ENCODE measurements at regions of chr1 and their contacts with region 1.

Region 1: GRCh38 chr1:31789259-31790065 is 25.3 kb upstream of the ADGRB2 start:
- DNase-seq: peak; percentile 50
- ATAC-seq: peak; percentile 87
- H3K4me3 ChIP-seq: peak overlapping the region; percentile 53 to 88
- H3K27ac ChIP-seq: peak overlapping the region; percentile 18; the same call in 1 of the 2 replicates
- H3K4me1 ChIP-seq: 0 out of 2 replicates have a peak, but pooled peaks cover 14% of the 10 kb centered on the region
- H3K27me3 ChIP-seq: no peaks in the 10 kb centered on the region
- CTCF ChIP-seq: peak; percentile 97

Region 2: GRCh38 chr1:31476891-31477828 is 312.3 kb before region 1 on chr1:
- CTCF ChIA-PET with region 1: no interaction called
- POLR2A ChIA-PET with region 1: no interaction called
- in situ Hi-C with region 1: no loop called
- intact Hi-C with region 1: no loop called
- DNase-seq: no peak
- ATAC-seq: no peak
- H3K4me3 ChIP-seq: no peak overlapping the region
- H3K27ac ChIP-seq: no peak overlapping the region
- H3K4me1 ChIP-seq: no peaks in the 10 kb centered on the region
- H3K27me3 ChIP-seq: no peaks in the 10 kb centered on the region
- CTCF ChIP-seq: no peak

Region 3: GRCh38 chr1:31548907-31549808 is 240.3 kb before region 1 on chr1:
- CTCF ChIA-PET with region 1: interaction called, 13 read pairs
- POLR2A ChIA-PET with region 1: no interaction called
- in situ Hi-C with region 1: no loop called
- intact Hi-C with region 1: no loop called
- DNase-seq: peak; percentile 84
- ATAC-seq: peak; percentile 95
- H3K4me3 ChIP-seq: peak overlapping the region; percentile 35 to 53
- H3K27ac ChIP-seq: peak overlapping the region; percentile 3; the same call in 1 of the 2 replicates
- H3K4me1 ChIP-seq: peaks cover 3% of the 10 kb centered on the region; the same call in 1 of the 2 replicates
- H3K27me3 ChIP-seq: no peaks in the 10 kb centered on the region
- CTCF ChIP-seq: peak; percentile 95

Region 4: DNA sequence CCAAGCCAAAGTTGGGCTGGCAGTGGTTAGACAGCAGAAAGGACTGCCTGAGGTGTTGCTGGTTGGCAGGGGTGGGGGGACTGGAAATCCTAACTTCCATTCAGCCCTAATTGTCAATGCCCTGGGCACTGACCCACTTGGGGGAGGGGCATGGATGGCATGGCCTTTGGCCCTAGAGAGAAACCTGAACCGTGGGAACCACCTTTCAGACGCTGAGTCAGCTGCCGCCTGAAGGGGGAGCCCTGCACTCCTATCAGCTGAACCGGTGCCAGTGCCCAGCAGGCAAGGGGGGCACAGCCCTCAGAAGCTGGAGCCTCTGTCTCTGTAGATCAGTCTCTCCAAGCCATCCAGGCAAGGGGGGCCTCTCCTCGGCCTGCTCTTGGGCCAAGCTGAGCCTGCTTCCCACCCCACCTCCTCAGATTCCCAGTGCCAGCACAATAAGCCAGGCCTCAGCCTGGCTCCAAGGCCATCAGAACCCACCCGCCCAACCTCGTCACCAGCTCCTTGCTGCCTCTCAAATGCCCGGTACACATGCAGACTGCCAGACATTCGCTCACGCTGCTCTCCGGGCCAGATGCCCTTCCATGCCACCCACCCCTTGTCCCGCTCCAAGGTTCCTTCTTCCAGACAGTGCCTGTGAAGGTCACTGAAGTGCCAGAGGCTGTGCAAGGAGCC is 201.6 kb before region 1 on chr1:
- CTCF ChIA-PET with region 1: interaction called, 10 read pairs
- POLR2A ChIA-PET with region 1: no interaction called
- in situ Hi-C with region 1: no loop called
- intact Hi-C with region 1: no loop called
- DNase-seq: no peak
- ATAC-seq: peak; percentile 75
- H3K4me3 ChIP-seq: no peak overlapping the region
- H3K27ac ChIP-seq: peak overlapping the region; percentile 71
- H3K4me1 ChIP-seq: peaks cover 33% of the 10 kb centered on the region
- H3K27me3 ChIP-seq: no peaks in the 10 kb centered on the region
- CTCF ChIP-seq: peak; percentile 91

Region 5: DNA sequence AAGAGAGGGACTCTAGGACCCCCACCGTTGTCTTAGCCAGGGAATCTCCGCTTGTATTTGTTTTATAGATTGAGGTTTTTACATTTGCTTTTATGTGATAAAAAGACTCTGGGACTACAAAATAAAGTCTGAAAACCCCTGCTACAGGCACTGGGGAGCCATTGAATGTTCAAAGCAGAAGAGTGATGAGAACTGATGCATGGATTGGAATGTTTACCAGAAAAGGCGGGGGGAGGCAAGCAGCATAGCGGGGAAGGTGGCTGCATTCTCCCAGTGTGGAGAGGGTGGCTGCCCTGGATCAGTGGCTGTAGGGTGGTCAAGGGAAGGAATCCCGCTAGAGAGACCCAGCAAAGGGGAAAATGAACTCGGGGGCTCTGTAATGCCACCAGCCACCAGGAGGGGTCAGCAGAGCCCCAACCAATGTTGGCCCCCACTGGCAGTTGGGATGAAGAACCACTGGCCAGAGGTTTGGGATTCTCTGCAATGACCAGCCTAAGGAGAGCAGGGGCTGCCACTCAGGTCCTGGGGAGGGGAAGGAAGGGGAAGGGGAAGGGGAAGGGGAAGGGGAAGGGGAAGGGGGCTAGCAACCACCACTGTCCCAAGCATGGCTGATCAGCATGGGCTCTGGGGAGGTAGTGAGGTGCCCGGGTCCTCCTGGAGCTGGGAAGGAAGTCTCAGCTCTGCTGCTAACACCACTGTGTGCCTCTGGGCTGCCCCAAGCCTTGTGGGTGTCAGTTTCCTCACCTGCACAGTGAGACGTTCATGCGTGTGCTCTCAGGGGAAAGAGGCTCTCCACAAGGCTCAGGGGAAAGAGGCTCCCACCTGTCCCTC is 125.6 kb before region 1 on chr1:
- CTCF ChIA-PET with region 1: interaction called, 23 read pairs
- POLR2A ChIA-PET with region 1: interaction called, 3 read pairs
- in situ Hi-C with region 1: no loop called
- intact Hi-C with region 1: loop called (anchors 1 kb)
- DNase-seq: peak; percentile 45
- ATAC-seq: peak; percentile 67
- H3K4me3 ChIP-seq: no peak overlapping the region
- H3K27ac ChIP-seq: peak overlapping the region; percentile 48; the same call in 1 of the 2 replicates
- H3K4me1 ChIP-seq: peaks cover 29% of the 10 kb centered on the region
- H3K27me3 ChIP-seq: no peaks in the 10 kb centered on the region
- CTCF ChIP-seq: peak; percentile 94

Region 6: DNA sequence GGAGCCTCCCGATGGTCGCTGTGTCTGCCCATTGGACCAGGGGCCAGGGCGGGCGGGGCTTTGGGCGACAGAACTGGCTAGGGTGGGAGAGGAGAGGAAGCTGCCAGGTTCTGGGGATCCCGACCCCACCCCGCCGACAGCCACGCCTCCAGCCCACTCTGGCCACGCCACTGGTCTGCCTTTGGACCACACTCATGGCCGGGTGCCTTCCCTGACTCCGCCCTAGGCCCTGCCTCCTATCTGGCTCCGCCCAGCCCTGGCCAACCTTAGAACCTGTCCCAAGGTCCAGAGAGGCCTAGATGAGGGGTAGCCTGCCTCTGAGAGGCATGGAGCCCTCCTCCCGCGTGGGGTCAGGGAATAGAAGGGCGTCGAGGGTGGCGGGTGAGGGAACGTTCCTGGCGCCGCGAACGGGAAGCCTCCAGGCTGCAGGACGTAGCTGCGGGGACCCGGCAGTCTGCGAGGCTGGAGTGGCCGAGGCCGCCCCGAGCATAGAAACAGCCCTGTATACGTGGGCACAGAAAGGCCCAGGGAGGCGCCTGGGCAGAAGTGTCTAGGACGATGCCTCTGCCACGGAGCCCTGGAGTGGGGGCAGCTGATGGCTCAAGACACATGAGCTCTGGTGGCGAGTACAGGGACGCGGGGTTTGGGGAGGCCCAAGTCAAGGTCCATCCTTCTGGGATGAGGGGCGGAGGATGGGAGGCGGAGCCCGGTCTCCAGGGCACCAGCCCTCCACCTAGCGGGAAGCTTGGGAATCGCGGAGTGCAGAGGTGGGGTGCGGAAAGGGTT is 74.2 kb before region 1 on chr1:
- CTCF ChIA-PET with region 1: interaction called, 24 read pairs
- POLR2A ChIA-PET with region 1: no interaction called
- in situ Hi-C with region 1: no loop called
- intact Hi-C with region 1: no loop called
- DNase-seq: peak; percentile 87
- ATAC-seq: peak; percentile 96
- H3K4me3 ChIP-seq: peak overlapping the region; percentile 55 to 78
- H3K27ac ChIP-seq: peak overlapping the region; percentile 86
- H3K4me1 ChIP-seq: peaks cover 44% of the 10 kb centered on the region
- H3K27me3 ChIP-seq: no peaks in the 10 kb centered on the region
- CTCF ChIP-seq: peak; percentile 96